IMR-90 (cell line): ENCODE measurements at regions of chr16 and their contacts with region 1.

Region 1: DNA sequence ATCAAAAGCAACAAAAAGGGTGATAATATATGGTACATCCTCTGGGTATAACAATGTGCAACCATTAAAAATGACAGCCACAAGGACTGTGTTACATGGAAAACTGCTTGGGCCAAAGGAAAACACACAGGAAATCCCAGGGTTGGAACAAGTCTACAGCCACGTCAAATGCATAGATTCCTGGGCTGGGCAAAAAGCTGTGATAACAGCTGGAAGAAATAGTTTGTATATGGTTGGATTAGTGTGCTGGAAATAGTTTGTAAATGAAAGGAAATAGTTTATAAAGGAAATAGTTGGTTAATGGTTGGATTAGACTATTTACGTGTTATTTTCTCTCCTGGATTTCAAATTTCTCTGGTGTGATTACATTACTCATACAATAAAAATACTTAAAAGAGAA is 2.6 kb downstream of the HSD17B2 start:
- DNase-seq: peak; percentile 53
- ATAC-seq: peak; percentile 70
- H3K4me3 ChIP-seq: no peak overlapping the region
- H3K27ac ChIP-seq: no peak overlapping the region
- H3K4me1 ChIP-seq: peaks cover 13% of the 10 kb centered on the region
- H3K27me3 ChIP-seq: no peaks in the 10 kb centered on the region
- CTCF ChIP-seq: no peak
- POLR2A ChIP-seq: no peak
- RAD21 ChIP-seq: no peak

Region 2: GRCh38 chr16:82067042-82067803 is 29.6 kb after region 1 on chr16:
- CTCF ChIA-PET with region 1: interaction called, 3 read pairs
- POLR2A ChIA-PET with region 1: no interaction called
- dilution Hi-C with region 1: no loop called
- in situ Hi-C with region 1: no loop called
- intact Hi-C with region 1: loop called (anchors 2 kb)
- DNase-seq: peak; percentile 31
- ATAC-seq: peak; percentile 61
- H3K4me3 ChIP-seq: no peak overlapping the region
- H3K27ac ChIP-seq: peak overlapping the region; percentile 97
- H3K4me1 ChIP-seq: peaks cover 22% of the 10 kb centered on the region
- H3K27me3 ChIP-seq: no peaks in the 10 kb centered on the region
- CTCF ChIP-seq: no peak
- POLR2A ChIP-seq: no peak
- RAD21 ChIP-seq: no peak